Prostate gland (tissue), 2 donors: ENCODE measurements at regions of chr2 and their contacts with region 1.

Region 1: DNA sequence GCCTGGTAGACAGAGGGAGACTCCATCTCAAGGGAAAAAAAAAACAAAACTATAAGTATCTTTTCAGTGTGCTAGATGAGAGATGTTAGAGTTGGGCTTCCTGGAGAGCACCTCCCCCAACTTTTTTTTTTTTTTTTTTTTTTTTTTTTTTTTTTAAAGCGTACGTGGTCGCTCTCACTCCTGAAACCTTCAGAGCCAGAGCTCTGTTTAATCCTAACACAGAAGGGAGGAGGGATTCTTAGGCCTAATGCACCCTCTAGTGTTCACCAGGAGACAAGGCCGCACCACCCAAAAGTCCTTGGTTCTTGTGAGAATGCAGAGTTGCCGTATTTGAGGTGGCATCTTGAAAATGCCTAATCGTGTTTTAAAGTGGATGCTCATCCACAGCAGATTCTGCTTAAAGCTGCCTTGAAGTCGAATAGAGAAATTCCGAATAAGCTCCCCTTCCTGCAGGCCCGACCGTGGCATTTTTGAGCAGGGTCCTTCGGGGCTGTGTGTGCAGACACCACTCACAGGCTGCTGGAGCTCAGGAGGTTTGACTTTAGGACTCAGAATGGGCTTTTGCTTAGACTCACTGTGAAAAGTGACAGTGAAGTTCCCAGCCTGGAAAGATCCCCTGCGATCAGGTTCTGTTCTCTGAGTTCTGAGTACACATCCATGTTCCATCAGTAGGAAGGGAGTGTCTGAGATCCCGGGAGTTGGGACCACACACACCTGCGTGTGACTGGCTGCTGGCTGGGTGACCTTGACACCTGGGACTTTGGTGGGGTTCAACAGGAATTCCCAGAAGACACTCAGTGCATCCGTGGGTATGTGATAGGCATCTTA is 252.6 kb downstream of the AGAP1 start:
- DNase-seq: peak; percentile 69
- H3K4me3 ChIP-seq: no peak overlapping the region
- H3K27ac ChIP-seq: no peak overlapping the region
- H3K4me1 ChIP-seq: no peaks in the 10 kb centered on the region
- H3K27me3 ChIP-seq: no peaks in the 10 kb centered on the region
- CTCF ChIP-seq: peak; percentile 58 to 80 (median 70)
- POLR2A ChIP-seq: no peak

Region 2: DNA sequence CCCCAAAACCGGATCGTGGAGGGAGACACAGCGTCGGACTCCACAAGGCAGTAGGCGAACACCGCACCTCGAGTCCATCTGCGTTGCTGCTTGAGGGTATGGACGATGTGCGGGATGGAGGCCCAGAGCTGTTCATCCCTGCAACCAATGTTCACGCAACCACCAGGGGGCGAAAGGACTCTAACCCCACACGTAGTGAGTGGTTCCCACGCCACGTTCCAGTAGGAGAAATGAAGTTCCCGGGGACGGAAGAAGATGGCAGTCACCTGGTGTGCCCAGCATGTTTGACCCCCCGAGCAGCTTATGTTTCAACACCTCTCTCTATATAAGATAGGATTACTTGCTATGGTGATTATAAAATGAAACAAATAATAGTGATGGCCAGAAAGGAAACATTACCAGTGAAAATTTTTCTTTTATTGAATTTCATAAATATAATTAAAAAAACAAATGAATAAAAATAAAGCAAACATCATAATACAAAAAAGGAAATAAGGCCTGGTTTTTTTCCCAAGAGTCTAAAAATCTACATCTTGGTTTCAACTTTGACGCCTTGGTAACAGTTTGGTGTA is 610.4 kb before region 1 on chr2:
- intact Hi-C with region 1: loop called (anchors 2 kb)
- DNase-seq: peak; percentile 61
- H3K4me3 ChIP-seq: no peak overlapping the region
- H3K27ac ChIP-seq: no peak overlapping the region
- H3K4me1 ChIP-seq: no peaks in the 10 kb centered on the region
- H3K27me3 ChIP-seq: no peaks in the 10 kb centered on the region
- CTCF ChIP-seq: peak; percentile 50 to 77 (median 68)
- POLR2A ChIP-seq: no peak

Region 3: GRCh38 chr2:235595422-235596010 is 151.0 kb before region 1 on chr2:
- intact Hi-C with region 1: loop called (anchors 2 kb)
- DNase-seq: peak; percentile 53
- H3K4me3 ChIP-seq: no peak overlapping the region
- H3K27ac ChIP-seq: no peak overlapping the region
- H3K4me1 ChIP-seq: no peaks in the 10 kb centered on the region
- H3K27me3 ChIP-seq: no peaks in the 10 kb centered on the region
- CTCF ChIP-seq: peak; percentile 79 to 82 (median 82)
- POLR2A ChIP-seq: no peak

Region 4: GRCh38 chr2:235709124-235709813 is 37.2 kb before region 1 on chr2:
- intact Hi-C with region 1: no loop called
- DNase-seq: no peak
- H3K4me3 ChIP-seq: no peak overlapping the region
- H3K27ac ChIP-seq: no peak overlapping the region
- H3K4me1 ChIP-seq: no peaks in the 10 kb centered on the region
- H3K27me3 ChIP-seq: no peaks in the 10 kb centered on the region
- CTCF ChIP-seq: no peak
- POLR2A ChIP-seq: no peak

Region 5: DNA sequence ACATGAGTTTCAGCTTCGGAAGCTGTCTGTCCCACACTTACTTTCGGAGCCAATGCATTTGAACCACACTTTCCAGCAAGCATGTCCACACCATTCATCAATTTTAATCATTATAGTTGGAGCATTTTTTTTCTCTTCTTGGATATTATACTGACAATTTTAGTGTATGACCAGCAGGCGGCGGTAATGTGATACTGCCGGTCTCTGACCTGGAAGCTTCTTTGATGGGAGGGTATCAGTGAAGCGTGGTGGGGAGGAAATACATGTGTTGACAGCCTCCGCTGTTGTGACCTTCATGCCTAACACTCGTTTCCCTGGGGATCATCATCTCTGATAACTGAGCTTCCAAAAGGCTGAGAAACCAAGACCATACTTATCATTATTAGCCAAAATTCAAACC is 190.0 kb after region 1 on chr2:
- intact Hi-C with region 1: no loop called
- DNase-seq: no peak
- H3K4me3 ChIP-seq: no peak overlapping the region
- H3K27ac ChIP-seq: no peak overlapping the region
- H3K4me1 ChIP-seq: no peaks in the 10 kb centered on the region
- H3K27me3 ChIP-seq: no peaks in the 10 kb centered on the region
- CTCF ChIP-seq: no peak
- POLR2A ChIP-seq: no peak